ENCODE measurements at regions of chr1 and their contacts with region 1.

Region 1: GRCh38 chr1:20716232-20716631 is 1.6 kb downstream of the KIF17 start:
- DNase-seq: no peak
- H3K27ac ChIP-seq: no peak overlapping the region
- CTCF ChIP-seq: no peak

Region 2: DNA sequence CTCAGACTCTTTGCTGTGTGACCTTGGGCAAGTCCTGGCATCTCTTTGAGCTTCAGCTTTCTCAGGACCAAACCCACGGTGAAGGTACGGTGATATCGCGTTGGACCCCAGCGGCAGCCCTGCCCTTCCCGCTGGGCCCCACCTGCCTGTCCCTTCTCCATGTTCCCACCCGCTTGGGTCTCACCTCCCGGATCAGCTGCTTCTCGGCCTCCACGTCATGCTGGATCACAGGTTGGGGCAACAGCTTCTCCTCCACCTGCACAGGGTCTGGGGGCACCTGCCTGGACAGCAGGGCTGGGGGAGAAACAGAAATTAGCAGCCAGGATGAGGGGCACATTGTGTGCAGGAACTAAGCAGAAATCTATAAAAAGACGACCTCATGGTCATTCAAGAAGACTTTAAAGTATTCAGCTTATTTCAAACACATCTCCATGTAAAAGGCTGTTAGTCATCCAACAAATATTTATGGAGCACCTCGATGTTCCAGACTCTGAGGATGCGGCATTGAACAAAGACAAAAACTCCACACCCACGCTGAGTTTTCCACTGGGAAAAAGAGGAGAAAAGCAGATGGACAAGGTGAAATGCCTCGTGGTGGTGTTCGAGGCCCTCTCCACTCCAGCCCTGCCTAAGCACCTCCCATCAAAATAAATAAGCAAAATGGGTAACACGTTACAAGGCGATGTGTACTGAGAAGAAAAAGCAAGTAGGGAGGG is 17.9 kb before region 1 on chr1:
- CTCF ChIA-PET with region 1: interaction called, 3 read pairs
- POLR2A ChIA-PET with region 1: interaction called, 10 read pairs
- DNase-seq: peak; percentile 50
- H3K27ac ChIP-seq: peak overlapping the region; percentile 92
- CTCF ChIP-seq: no peak

Measured in RWPE1 (cell line).